WTC11 (cell line): ENCODE measurements at regions of chr1 and their contacts with region 1.

Region 1: GRCh38 chr1:213523781-213524398 is 463.9 kb upstream of the PROX1 start:
- DNase-seq: no peak
- ATAC-seq: peak; percentile 47
- H3K4me3 Mint-ChIP-seq: no peak overlapping the region
- H3K27ac Mint-ChIP-seq: no peak overlapping the region
- H3K4me1 Mint-ChIP-seq: no peaks in the 10 kb centered on the region; the same call in 1 of the 2 replicates
- H3K27me3 Mint-ChIP-seq: no peaks in the 10 kb centered on the region
- CTCF ChIP-seq: no peak

Region 2: GRCh38 chr1:212671342-212672031 is 852.4 kb before region 1 on chr1:
- CTCF ChIA-PET with region 1: no interaction called
- POLR2A ChIA-PET with region 1: interaction called, 11 read pairs
- DNase-seq: no peak
- ATAC-seq: peak; percentile 61
- H3K4me3 Mint-ChIP-seq: no peak overlapping the region
- H3K27ac Mint-ChIP-seq: peak overlapping the region; percentile 7; the same call in 1 of the 2 replicates
- H3K4me1 Mint-ChIP-seq: peaks cover 27% of the 10 kb centered on the region
- H3K27me3 Mint-ChIP-seq: peaks cover 7% of the 10 kb centered on the region
- CTCF ChIP-seq: no peak

Region 3: DNA sequence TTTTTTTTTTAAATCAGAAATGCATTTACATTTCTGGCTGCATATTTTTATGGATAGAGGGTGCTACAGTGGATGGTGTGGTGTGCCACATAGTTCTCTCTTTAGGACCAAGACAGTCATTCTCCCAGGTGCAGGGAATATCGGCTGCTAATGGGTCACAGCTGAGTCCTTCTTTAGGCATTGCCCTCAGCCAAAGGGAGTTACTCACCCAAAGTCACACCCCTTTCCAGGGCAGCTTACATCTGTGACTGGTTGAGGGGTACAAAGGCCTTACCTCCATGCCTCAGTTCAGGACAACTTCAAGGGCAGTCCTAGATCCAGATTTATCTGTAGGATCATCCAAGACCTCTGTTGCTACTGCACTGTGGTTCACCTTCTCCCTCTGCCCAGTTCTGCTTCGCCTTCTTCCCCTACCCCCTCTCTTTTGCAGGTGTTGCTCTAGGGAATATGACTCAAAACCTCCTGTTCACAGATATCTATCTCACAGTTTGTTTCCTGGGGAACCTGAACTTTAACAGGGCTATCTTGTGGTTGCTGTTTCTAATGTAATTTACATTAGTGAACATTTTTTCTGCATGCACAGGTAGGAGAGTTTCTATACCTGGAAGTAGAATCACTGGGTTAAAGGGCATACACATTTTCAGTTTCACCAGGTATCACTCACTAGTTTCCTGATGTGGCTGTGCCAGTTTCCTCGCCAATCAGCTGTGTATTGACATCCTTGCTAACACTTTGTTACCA is 58.9 kb before region 1 on chr1:
- CTCF ChIA-PET with region 1: no interaction called
- POLR2A ChIA-PET with region 1: no interaction called
- DNase-seq: no peak
- ATAC-seq: no peak
- H3K4me3 Mint-ChIP-seq: no peak overlapping the region
- H3K27ac Mint-ChIP-seq: no peak overlapping the region
- H3K4me1 Mint-ChIP-seq: 0 out of 2 replicates have a peak, but pooled peaks cover 4% of the 10 kb centered on the region
- H3K27me3 Mint-ChIP-seq: peaks cover 2% of the 10 kb centered on the region; the same call in 1 of the 2 replicates
- CTCF ChIP-seq: no peak

Region 4: DNA sequence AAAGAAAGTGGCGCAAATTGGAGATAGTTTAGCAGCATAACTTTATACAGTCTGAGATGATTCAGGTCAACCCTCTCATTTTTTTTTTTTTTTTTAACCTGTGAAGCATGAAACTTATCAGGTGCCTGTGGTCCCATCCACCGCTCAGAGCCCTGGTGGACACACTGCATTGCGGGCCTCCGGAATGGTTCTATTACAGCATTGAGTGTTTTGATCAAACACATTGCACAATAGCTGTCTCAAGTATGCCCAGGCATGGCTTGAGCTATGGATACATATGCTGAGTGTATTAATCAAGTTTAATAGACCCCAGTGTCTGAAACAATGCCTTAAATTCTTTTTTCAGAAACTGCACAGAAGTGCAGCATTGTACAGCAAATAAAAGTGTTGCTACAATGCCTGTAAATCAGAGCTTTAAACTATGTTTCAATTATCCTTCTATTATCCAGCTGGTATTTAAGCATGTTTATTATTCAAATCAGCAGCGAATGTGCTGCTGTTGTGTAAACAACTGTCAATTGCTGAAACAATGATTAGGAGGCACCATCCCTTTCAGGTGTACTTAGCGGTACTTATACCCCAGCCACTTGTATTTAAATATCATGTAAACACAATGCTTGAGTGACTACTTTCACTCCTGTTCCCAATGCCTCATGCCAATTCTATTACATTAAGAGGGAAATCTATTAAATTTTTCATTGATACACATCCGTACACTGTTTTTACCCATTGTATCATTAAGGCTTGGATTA is 16.2 kb before region 1 on chr1:
- CTCF ChIA-PET with region 1: no interaction called
- POLR2A ChIA-PET with region 1: no interaction called
- DNase-seq: no peak
- ATAC-seq: peak; percentile 65
- H3K4me3 Mint-ChIP-seq: 0 out of 2 replicates have a peak overlapping the region, but pooled peaks have one; percentile 3
- H3K27ac Mint-ChIP-seq: no peak overlapping the region
- H3K4me1 Mint-ChIP-seq: peaks cover 21% of the 10 kb centered on the region
- H3K27me3 Mint-ChIP-seq: peaks cover 24% of the 10 kb centered on the region
- CTCF ChIP-seq: no peak

Region 5: DNA sequence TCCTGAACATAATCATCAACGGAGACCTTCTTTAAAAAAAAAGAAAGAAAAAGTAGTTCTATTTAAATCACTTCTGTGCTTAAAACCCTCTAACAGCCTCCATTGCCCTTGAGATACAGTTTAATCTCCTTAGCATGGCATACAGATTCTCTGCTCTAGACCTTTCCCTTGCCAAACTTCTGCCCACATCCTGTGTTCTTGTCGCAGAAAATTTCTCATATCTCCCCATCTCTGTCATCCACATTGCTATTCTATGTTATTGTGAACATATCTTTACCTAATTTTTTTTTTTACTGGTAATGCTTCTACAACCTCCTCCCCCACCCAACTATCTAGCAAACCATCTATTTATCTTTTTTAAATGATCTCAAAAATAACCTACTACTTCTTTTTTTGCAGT is 328.2 kb after region 1 on chr1:
- CTCF ChIA-PET with region 1: no interaction called
- POLR2A ChIA-PET with region 1: no interaction called
- DNase-seq: no peak
- ATAC-seq: no peak
- H3K4me3 Mint-ChIP-seq: no peak overlapping the region
- H3K27ac Mint-ChIP-seq: no peak overlapping the region
- H3K4me1 Mint-ChIP-seq: no peaks in the 10 kb centered on the region
- H3K27me3 Mint-ChIP-seq: no peaks in the 10 kb centered on the region
- CTCF ChIP-seq: no peak